ENCODE measurements at regions of chr19 and their contacts with region 1.

Region 1: GRCh38 chr19:49546825-49547565 is 19.2 kb downstream of the RCN3 start:
- DNase-seq: peak in 8 of 9 donors; percentile 62 to 82 (median 78)
- ATAC-seq: peak; percentile 92
- H3K4me3 ChIP-seq: peak overlapping the region; percentile 30
- H3K4me3 Mint-ChIP-seq: peak overlapping the region; percentile 78 to 94 (median 84)
- H3K27ac ChIP-seq: peak overlapping the region; percentile 46
- H3K27ac Mint-ChIP-seq: peak overlapping the region; percentile 76 to 99 (median 91)
- H3K4me1 ChIP-seq: peaks cover 17 to 60% of the 10 kb centered on the region in 2 donors
- H3K4me1 Mint-ChIP-seq: peaks cover 29 to 81% (median 48%) of the 10 kb centered on the region in 7 donors
- H3K27me3 ChIP-seq: no peaks in the 10 kb centered on the region
- H3K27me3 Mint-ChIP-seq: peaks cover 0 to 3% (median 0%) of the 10 kb centered on the region in 5 donors

Region 2: GRCh38 chr19:49502866-49503581 is 44.0 kb before region 1 on chr19:
- CTCF ChIA-PET with region 1: interaction called, 13 read pairs
- POLR2A ChIA-PET with region 1: interaction called, 29 read pairs
- intact Hi-C with region 1: loop called (anchors 1 kb)
- DNase-seq: peak in 5 of 9 donors; percentile 68 to 81 (median 77)
- ATAC-seq: no peak
- H3K4me3 ChIP-seq: no peak overlapping the region
- H3K4me3 Mint-ChIP-seq: peak overlapping the region in 6 of 10 donors; percentile 7 to 96 (median 48)
- H3K27ac ChIP-seq: peak overlapping the region; percentile 99
- H3K27ac Mint-ChIP-seq: peak overlapping the region; percentile 91 to 100 (median 98)
- H3K4me1 ChIP-seq: peaks cover 36% of the 10 kb centered on the region in 2 donors
- H3K4me1 Mint-ChIP-seq: peaks cover 24 to 55% (median 40%) of the 10 kb centered on the region in 7 donors
- H3K27me3 ChIP-seq: no peaks in the 10 kb centered on the region
- H3K27me3 Mint-ChIP-seq: peaks cover 0 to 9% (median 0%) of the 10 kb centered on the region in 5 donors

Region 3: GRCh38 chr19:49512970-49513745 is 33.8 kb before region 1 on chr19:
- CTCF ChIA-PET with region 1: interaction called, 13 read pairs
- POLR2A ChIA-PET with region 1: interaction called, 14 read pairs
- intact Hi-C with region 1: no loop called
- DNase-seq: peak in 1 of 9 donors; percentile 12
- ATAC-seq: peak; percentile 49
- H3K4me3 ChIP-seq: peak overlapping the region; percentile 61
- H3K4me3 Mint-ChIP-seq: peak overlapping the region; percentile 84 to 95 (median 90)
- H3K27ac ChIP-seq: peak overlapping the region; percentile 81
- H3K27ac Mint-ChIP-seq: peak overlapping the region; percentile 74 to 92 (median 89)
- H3K4me1 ChIP-seq: peaks cover 11 to 40% of the 10 kb centered on the region in 2 donors
- H3K4me1 Mint-ChIP-seq: peaks cover 24 to 57% (median 40%) of the 10 kb centered on the region in 7 donors
- H3K27me3 ChIP-seq: no peaks in the 10 kb centered on the region
- H3K27me3 Mint-ChIP-seq: peaks cover 0 to 13% (median 0%) of the 10 kb centered on the region in 5 donors

Region 4: DNA sequence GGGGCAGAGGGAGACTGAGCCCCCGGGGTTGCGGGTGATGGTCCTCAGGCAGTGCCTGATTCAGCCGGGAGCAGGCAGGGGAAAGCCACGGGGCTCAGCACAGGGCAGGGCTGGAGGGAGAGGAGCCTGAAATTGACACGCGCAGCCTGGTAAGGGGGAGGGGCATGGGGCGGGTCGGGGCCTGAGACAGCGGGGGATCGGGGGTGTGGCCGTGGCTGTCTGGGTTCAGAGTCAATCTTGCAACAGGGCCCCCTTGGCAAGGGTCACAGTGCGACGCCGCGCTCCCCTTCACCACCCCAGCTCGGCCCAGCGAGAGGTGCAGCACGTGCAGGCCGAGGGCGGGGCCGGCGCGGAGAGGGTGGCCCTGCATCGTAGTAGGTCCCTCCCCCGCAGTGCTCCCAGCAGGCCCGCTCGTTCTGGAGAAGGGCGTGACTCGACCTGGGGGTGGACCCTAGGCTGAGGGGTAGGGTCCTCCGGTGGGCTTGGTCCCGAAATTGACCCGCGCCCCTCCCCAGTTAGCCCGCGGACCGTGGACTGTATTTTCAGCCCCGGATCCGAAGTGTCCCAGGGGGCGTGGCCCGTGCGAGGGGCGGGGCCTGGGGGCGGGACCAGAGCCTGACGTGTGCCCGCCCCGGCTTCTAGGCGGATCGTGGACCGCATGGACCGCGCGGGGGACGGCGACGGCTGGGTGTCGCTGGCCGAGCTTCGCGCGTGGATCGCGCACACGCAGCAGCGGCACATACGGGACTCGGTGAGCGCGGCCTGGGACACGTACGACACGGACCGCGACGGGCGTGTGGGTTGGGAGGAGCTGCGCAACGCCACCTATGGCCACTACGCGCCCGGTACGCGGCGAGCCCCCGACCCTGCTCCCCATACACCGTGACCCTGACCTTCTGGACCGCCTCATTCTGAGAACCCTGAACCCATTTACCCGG is 13.2 kb before region 1 on chr19:
- CTCF ChIA-PET with region 1: interaction called, 26 read pairs
- POLR2A ChIA-PET with region 1: interaction called, 17 read pairs
- intact Hi-C with region 1: loop called in 1 of 2 experiments (anchors 1 kb)
- DNase-seq: peak; percentile 80 to 96 (median 89)
- ATAC-seq: peak; percentile 94
- H3K4me3 ChIP-seq: peak overlapping the region; percentile 58
- H3K4me3 Mint-ChIP-seq: peak overlapping the region; percentile 77 to 95 (median 91)
- H3K27ac ChIP-seq: peak overlapping the region; percentile 66
- H3K27ac Mint-ChIP-seq: peak overlapping the region; percentile 41 to 95 (median 72)
- H3K4me1 ChIP-seq: peaks cover 12 to 21% of the 10 kb centered on the region in 2 donors
- H3K4me1 Mint-ChIP-seq: peaks cover 19 to 32% (median 24%) of the 10 kb centered on the region in 7 donors
- H3K27me3 ChIP-seq: no peaks in the 10 kb centered on the region
- H3K27me3 Mint-ChIP-seq: peaks cover 0 to 4% (median 0%) of the 10 kb centered on the region in 5 donors

Region 5: DNA sequence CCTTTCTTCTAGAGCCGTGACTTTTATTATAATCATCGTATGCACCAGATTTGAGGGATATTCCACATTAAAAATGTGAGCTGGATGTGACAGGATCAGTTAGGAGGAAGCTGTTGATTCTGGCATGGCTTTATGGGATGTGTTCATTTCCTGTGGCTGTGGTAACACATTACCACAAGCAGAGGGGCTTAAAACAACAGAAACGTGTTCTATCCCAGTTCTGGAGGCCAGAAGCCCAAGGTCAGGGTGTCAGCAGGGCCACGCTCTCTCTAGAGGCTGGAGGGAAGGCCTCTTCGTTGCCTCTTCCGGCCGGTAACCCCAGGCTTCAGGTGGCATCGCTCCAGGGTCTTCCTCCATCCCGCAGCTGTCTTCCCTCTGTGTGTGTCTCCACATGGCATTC is 285.6 kb after region 1 on chr19:
- CTCF ChIA-PET with region 1: no interaction called
- POLR2A ChIA-PET with region 1: no interaction called
- intact Hi-C with region 1: no loop called
- DNase-seq: no peak
- ATAC-seq: no peak
- H3K4me3 ChIP-seq: no peak overlapping the region
- H3K4me3 Mint-ChIP-seq: peak overlapping the region in 1 of 10 donors; percentile 23
- H3K27ac ChIP-seq: no peak overlapping the region
- H3K27ac Mint-ChIP-seq: peak overlapping the region in 1 of 9 donors; percentile 43
- H3K4me1 ChIP-seq: no peaks in the 10 kb centered on the region
- H3K4me1 Mint-ChIP-seq: peaks cover 0 to 10% (median 0%) of the 10 kb centered on the region in 7 donors
- H3K27me3 ChIP-seq: no peaks in the 10 kb centered on the region
- H3K27me3 Mint-ChIP-seq: no peaks in the 10 kb centered on the region

Measured in naive thymus-derived CD4-positive, alpha-beta T cell (primary cell).